ENCODE measurements at regions of chr7 and their contacts with region 1.

Region 1: DNA sequence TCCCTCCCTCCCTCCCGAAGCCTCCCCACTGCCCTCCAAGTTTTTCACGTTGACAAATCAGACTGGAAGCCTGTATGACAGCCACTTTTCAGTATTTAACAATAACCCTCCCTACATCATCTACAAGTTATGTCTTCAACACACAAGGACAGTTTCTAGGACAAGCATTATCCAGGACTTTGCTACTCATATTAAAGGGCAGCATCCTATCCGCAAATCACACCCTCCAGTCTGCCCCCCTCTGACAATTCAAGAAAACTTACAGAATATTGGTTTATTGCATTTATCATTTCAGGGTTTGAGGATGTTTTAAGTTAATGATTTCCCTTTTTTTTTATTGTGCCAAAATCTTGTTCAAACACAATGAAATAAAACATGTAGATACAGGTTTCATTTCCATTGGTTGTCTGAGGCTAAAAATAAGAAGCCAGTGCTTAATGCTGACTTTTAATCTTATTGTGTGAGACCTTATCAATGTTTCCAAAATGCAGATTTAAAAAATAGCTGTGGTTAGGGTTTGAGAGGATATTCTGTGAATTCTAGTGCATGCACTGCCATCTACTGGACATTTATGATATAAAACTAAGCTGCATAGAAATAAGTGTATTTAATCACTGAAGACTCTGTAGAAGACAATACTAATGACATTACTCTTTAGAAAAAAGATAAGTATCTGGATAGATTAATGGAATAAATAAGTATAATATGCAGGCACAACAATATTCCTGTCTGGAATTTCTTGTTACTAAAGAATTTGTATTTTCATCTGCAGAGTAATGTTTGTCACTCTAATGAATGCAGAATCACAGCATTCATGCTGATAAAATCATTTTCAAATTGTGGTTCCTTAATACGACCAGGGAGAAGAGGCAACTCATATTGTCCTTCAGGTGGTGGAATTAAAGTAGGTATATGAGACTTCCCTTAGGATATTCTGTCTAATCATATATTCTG is 64.1 kb downstream of the CAV1 start:
- DNase-seq: no peak
- H3K4me3 ChIP-seq: no peak overlapping the region
- H3K27me3 ChIP-seq: no peaks in the 10 kb centered on the region; the same call in 1 of the 2 replicates
- CTCF ChIP-seq: no peak

Region 2: GRCh38 chr7:116242178-116242577 is 346.7 kb before region 1 on chr7:
- CTCF ChIA-PET with region 1: interaction called, 14 read pairs
- POLR2A ChIA-PET with region 1: no interaction called
- DNase-seq: no peak
- H3K4me3 ChIP-seq: no peak overlapping the region
- H3K27me3 ChIP-seq: no peaks in the 10 kb centered on the region
- CTCF ChIP-seq: peak; percentile 38

Region 3: DNA sequence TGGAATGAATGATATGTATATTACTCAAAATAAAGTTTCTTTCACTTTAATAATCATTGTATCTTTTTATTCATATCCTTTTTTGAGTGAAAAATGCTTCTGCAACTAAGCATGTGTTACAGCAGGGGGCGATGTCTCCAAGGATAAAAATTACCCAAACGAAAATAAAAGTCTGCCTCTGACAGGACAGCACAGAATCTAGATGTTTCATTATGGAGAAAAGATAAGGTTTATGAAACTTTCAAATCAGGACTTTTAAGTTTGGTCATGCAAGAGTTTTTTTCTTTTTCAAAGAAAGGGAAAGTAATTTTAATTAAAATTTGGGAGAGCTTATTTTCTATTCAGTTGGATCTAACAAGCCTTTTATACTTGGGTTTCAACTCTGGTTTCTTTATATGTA is 330.2 kb before region 1 on chr7:
- CTCF ChIA-PET with region 1: interaction called, 77 read pairs
- POLR2A ChIA-PET with region 1: no interaction called
- DNase-seq: no peak
- H3K4me3 ChIP-seq: no peak overlapping the region
- H3K27me3 ChIP-seq: no peaks in the 10 kb centered on the region
- CTCF ChIP-seq: peak; percentile 69

Region 4: GRCh38 chr7:116271963-116272839 is 316.7 kb before region 1 on chr7:
- CTCF ChIA-PET with region 1: interaction called, 10 read pairs
- POLR2A ChIA-PET with region 1: no interaction called
- DNase-seq: peak; percentile 85
- H3K4me3 ChIP-seq: peak overlapping the region; percentile 14
- H3K27me3 ChIP-seq: no peaks in the 10 kb centered on the region
- CTCF ChIP-seq: no peak

Region 5: DNA sequence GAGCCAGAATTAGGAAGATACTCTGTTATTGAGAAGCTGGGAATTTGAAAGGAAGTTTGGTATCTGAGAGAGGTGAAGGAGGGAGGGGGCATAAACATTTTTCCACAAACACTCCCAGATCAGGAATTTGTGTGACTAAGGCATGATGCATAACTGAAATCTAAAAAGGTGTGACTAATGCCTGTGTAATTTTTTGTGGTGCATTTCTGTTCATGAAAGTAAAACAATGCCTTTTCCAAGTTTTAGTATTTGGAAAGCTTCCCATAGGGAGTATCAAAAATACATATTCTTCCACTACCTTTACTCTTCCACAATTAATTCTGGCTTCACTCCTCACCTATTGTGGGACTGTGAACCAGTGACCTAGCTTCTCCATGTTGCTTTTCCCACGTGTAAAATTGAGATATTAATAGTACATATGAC is 145.8 kb before region 1 on chr7:
- CTCF ChIA-PET with region 1: interaction called, 10 read pairs
- POLR2A ChIA-PET with region 1: no interaction called
- DNase-seq: peak; percentile 81
- H3K4me3 ChIP-seq: no peak overlapping the region
- H3K27me3 ChIP-seq: no peaks in the 10 kb centered on the region
- CTCF ChIP-seq: no peak

Region 6: DNA sequence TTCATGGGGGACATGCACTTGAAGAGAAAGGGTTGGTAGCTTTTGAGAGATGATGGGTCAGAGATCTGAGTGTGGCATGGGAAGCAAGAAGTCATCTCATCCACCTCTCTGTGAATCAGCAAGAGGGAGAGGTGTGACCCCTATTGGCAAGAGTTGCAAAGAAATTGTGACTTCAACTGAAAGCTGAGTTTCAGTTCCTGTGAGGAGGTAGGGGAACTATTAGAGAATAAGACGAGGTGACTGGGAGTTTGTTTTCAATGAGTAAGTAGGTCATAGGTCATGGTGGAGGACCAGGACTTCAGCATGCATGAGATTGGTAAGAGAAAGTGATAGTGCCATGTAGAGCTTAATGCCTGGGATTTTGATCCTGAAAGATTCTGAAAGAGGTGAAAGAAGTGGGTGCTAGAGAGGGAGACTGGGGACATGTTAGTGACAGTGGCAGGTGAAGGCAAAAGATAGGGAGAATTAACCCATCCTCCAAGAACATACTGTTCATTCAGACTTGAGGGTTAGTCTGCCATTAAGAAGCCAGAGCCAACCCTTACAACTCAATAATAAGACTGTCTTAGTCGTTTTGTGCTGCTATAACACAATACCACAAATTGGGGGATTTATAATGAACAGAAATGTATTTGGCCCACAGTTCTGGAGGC is 198.0 kb after region 1 on chr7:
- CTCF ChIA-PET with region 1: interaction called, 11 read pairs
- POLR2A ChIA-PET with region 1: no interaction called
- DNase-seq: no peak
- H3K4me3 ChIP-seq: no peak overlapping the region
- H3K27me3 ChIP-seq: no peaks in the 10 kb centered on the region
- CTCF ChIP-seq: peak; percentile 26

Region 7: GRCh38 chr7:116809636-116810266 is 220.8 kb after region 1 on chr7:
- CTCF ChIA-PET with region 1: interaction called, 75 read pairs
- POLR2A ChIA-PET with region 1: no interaction called
- DNase-seq: no peak
- H3K4me3 ChIP-seq: no peak overlapping the region
- H3K27me3 ChIP-seq: no peaks in the 10 kb centered on the region
- CTCF ChIP-seq: peak; percentile 53